Right ventricle myocardium inferior (tissue), 1 donor: ENCODE measurements at regions of chr18 and their contacts with region 1.

Region 1: GRCh38 chr18:63936156-63936931 is 12.8 kb upstream of the HMSD start:
- DNase-seq: peak; percentile 96
- ATAC-seq: peak; percentile 99

Region 2: GRCh38 chr18:63518178-63519012 is 417.9 kb before region 1 on chr18:
- intact Hi-C with region 1: loop called (anchors 2 kb)
- DNase-seq: no peak
- ATAC-seq: no peak

Region 3: DNA sequence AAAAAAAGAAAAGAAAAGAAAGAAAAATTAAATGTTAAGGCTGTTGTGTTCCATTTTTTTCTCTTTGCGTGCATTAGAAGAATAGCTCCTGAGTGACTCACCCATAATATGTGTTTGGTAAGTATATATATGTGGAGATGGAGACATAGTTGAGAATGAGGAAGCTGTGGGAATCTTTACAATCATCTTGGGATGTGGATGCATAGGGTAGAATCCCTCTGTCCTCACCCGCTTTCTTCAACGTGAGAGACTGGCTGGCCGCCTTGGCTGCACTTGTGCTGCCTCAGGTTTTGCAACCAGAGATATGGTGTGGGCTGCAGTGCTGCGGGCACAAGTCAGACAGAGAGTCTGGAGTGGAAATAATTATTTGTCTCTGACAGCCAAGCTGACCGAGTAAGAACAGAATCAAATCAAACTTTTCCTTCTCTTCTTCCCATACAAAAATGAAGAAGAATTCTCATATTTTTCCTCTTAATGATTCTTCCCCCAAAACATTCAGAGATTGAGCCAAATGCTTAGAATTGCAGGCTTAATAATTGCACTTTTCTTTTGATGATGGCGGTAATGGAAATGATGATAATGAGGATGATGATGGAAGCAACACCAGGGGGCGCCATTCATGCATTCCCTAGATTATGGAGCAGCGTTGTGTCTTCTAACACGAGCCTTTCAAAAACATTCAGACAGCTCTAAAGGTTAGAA is 112.7 kb before region 1 on chr18:
- intact Hi-C with region 1: loop called (anchors 1 kb)
- DNase-seq: peak; percentile 70
- ATAC-seq: no peak